BJ (cell line): ENCODE measurements at regions of chr2 and their contacts with region 1.

Region 1: DNA sequence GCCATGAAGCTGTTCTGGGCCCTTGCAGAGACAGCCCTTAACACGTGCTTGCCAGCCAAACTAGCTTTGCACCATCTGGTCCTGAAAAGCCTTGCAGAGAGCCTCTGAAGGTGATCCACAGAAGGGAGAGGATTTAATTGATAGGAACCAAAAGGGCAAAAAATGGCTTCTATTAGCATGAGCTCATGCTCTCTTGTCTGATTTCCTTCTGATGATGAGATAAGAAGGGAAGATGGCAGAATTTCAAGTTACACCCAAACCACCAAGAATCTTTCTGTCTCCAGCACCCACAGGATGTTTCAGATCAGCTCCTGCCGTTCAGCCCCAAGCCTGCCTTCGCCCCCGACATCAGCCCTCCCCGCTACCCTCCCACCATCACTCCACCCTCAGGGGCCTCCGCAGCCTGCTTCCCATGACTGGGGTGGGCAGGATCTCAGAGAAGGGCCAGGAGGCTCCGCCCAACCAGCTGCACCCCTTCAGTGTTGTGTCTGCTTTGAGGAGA is 23.4 kb upstream of the GLI2 start:
- DNase-seq: no peak
- H3K4me3 ChIP-seq: no peak overlapping the region
- H3K27me3 ChIP-seq: no peaks in the 10 kb centered on the region
- CTCF ChIP-seq: no peak

Region 2: DNA sequence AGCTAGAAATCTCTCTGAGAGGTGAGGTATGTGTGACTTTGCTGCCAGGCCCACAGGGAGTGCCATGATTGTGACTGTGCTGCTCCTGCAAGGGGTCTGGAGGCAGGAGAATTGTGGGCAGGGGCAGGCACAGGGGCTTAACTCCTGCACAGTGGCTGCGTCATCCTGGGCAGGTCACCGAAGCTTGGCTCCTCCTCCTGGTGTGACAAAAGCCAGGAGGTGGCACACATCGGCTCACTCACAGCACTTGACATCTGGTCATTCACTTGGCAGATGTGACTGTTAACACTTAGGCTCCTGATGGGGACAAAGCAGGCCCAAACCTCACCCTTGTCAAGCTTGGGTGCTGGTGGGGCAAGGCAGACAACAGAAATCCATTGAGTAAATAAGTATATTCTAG is 12.9 kb before region 1 on chr2:
- CTCF ChIA-PET with region 1: interaction called, 18 read pairs
- POLR2A ChIA-PET with region 1: no interaction called
- DNase-seq: no peak
- H3K4me3 ChIP-seq: no peak overlapping the region
- H3K27me3 ChIP-seq: peaks cover 2% of the 10 kb centered on the region; the same call in 1 of the 2 replicates
- CTCF ChIP-seq: no peak

Region 3: DNA sequence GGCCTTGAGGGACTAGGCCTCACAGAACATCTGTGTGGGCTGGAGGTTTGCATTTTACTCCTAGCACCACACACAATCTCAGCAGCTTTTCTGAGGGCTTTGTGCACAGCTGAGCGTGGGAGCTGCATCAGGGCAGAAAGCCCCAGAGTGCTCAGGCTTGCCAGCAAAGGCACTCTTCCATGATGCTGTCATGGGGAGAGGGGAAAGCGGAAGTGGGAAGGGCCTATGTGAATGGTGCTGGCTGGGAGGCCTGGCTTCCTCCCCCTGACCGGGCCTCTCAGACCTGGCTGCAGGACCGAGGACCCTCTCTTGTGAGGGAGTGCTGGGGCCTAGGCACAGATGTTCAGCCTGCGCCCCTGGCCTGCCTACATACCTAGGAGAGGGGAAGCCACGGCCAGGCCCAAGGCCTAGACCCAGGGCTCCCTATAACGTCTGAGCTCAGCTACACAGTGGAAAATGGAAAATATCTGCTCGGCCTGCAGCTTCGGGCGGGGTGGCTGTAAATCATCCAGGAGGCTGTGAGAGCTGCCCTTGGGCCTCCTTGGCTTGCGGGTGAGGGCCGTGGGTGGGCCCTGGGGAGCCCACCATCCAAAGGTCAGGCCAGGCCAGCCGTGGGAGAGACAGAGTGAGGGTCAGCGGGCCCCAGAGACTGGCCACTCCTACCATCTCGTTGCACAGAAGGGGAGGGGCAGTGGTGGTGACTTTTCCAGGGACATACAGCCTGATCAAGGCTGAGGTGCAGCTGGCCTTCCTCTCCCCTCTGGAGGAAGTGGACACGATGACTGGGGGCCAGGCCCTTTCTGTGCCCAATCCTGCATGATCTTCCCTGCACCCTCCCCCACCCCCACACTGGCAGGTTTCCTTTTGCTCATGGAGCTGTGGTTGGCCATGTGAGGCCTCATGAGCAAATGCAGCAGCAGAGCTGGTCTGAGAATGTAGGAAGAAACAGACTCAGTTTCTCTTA is 46.2 kb after region 1 on chr2:
- CTCF ChIA-PET with region 1: no interaction called
- POLR2A ChIA-PET with region 1: interaction called, 17 read pairs
- DNase-seq: no peak
- H3K4me3 ChIP-seq: no peak overlapping the region
- H3K27me3 ChIP-seq: no peaks in the 10 kb centered on the region
- CTCF ChIP-seq: no peak

Region 4: GRCh38 chr2:121171625-121172119 is 459.4 kb after region 1 on chr2:
- CTCF ChIA-PET with region 1: no interaction called
- POLR2A ChIA-PET with region 1: interaction called, 13 read pairs
- DNase-seq: no peak
- H3K4me3 ChIP-seq: no peak overlapping the region
- H3K27me3 ChIP-seq: peaks cover 8% of the 10 kb centered on the region
- CTCF ChIP-seq: no peak